ENCODE measurements at regions of chr1 and their contacts with region 1.

Region 1: DNA sequence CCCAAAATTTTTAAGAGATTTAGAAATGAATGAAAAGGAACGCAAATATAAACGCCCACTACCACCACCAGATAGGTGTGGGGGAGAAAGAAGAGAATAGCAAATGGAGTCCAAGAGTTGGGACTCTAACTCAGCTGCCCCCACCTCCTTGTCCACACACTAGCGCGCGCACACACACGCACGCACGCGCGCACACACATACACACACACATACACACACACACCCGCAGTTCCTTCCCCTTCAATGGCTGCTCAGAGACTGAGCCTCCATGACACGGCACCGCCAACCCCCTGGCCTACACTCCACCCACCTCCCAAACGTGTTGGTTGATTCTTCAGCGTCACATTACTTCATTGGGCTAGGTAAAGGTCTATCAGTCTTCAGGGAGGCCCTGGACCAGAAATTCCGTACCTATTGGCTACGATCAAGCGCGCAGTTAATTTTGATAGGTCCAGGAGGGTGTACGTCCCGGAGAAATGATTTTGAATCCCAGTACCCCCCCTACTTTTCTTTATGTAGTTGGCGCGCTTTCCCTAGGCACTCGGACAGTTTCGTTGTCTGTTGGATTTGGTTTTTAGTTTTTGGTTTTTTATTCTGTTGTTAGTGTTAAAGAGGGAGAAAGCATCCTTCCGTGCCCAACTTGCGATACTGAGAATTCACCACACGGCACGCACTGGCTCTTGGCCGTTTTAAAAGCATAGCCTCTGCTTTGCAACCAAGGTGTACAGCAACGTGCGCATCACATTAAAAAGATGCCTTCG is at the start of gene ANP32E:
- DNase-seq: peak; percentile 69 to 97 (median 94)
- H3K4me3 ChIP-seq: peak within 1 kb of the TSS; percentile 72 to 98 (median 90)
- H3K27ac ChIP-seq: peak within 1 kb of the TSS; percentile 63 to 99 (median 94)
- H3K27me3 ChIP-seq: no peaks in the 10 kb centered on the region
- CTCF ChIP-seq: peak in 15 of 56 donors; percentile 2 to 29 (median 18)
- total RNA-seq, gene ANP32E: 24.9 to 73.5 (median 41.6) TPM

Region 2: GRCh38 chr1:150021191-150021694 is 214.8 kb before region 1 on chr1:
- intact Hi-C with region 1: no loop called
- DNase-seq: no peak
- H3K4me3 ChIP-seq: no peak overlapping the region
- H3K27ac ChIP-seq: peak overlapping the region in 2 of 59 donors; percentile 3 to 43
- H3K27me3 ChIP-seq: no peaks in the 10 kb centered on the region
- CTCF ChIP-seq: no peak

Region 3: DNA sequence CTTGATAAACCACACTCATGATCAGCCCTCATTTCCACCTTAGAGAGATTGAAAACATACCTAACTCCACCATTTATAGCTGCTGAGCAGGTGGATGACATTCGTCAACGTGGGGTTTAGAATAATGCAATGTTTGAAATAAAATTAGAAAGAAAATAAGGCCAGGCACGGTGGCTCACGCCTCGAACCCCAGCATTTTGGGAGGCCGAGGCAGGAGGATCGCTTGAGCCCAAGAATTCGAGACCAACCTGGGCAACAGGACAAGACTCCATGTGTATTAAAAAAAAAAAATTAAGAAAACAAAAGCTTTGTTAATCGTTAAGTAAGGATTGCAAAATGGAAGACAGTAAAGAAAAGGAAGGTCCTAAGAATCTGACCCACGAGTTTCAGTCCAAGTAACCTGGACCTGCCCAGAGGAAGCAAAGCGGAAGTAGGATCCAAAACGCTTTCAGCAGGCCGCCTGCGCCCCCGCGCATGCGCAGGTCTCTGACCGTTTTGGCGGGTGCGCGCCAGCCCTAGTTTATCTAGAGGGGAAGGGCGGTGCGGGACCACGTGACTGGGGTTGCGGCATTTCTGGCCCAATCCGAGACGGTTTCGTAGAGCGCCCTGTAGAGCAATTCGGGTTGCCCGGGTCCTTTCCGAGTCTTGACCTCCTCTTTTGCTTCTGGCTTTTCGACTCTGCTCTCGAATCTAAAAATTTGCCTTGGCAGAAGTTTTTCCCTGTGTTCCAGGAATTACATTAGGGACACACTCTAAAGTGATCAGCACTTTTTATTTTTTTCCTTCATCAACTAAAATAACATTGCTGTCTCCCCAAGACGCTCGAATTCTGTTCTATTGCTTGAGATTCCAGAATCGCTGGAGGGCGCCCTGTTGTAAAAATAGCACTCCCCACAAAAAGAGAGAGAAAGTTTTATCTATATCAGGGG is 22.6 kb before region 1 on chr1:
- intact Hi-C with region 1: loop called in 1 of 2 experiments (anchors 1 kb)
- DNase-seq: peak; percentile 91 to 98 (median 96)
- H3K4me3 ChIP-seq: peak overlapping the region; percentile 31 to 74 (median 59)
- H3K27ac ChIP-seq: peak overlapping the region in 58 of 59 donors; percentile 47 to 97 (median 86)
- H3K27me3 ChIP-seq: no peaks in the 10 kb centered on the region
- CTCF ChIP-seq: peak in 53 of 56 donors; percentile 25 to 71 (median 54)

Region 4: GRCh38 chr1:150281837-150282653 is 46.0 kb after region 1 on chr1 and contains the start of gene CIART:
- intact Hi-C with region 1: loop called in 1 of 2 experiments (anchors 10 kb)
- DNase-seq: peak; percentile 91 to 99 (median 96)
- H3K4me3 ChIP-seq: peak within 1 kb of the TSS; percentile 57 to 93 (median 76)
- H3K27ac ChIP-seq: peak within 1 kb of the TSS; percentile 46 to 97 (median 91)
- H3K27me3 ChIP-seq: no peaks in the 10 kb centered on the region
- CTCF ChIP-seq: peak in 3 of 56 donors; percentile 7 to 24 (median 22)
- total RNA-seq, gene CIART: 5.3 to 26.5 (median 12.5) TPM

Region 5: GRCh38 chr1:150383631-150384324 is 147.7 kb after region 1 on chr1:
- intact Hi-C with region 1: no loop called
- DNase-seq: no peak
- H3K4me3 ChIP-seq: no peak overlapping the region
- H3K27ac ChIP-seq: no peak overlapping the region
- H3K27me3 ChIP-seq: no peaks in the 10 kb centered on the region
- CTCF ChIP-seq: no peak